PC-9 (cell line): ENCODE measurements at regions of chr12 and their contacts with region 1.

Region 1: GRCh38 chr12:15789220-15790171 is at the start of gene EPS8:
- DNase-seq: peak; percentile 90 to 100
- H3K4me3 ChIP-seq: peak within 1 kb of the TSS; percentile 64
- H3K27ac ChIP-seq: peak within 1 kb of the TSS; percentile 79
- H3K4me1 ChIP-seq: peaks cover 37% of the 10 kb centered on the region
- H3K27me3 ChIP-seq: no peaks in the 10 kb centered on the region
- CTCF ChIP-seq: no peak
- total RNA-seq, gene EPS8: 224 and 232 TPM in 2 replicates

Region 2: DNA sequence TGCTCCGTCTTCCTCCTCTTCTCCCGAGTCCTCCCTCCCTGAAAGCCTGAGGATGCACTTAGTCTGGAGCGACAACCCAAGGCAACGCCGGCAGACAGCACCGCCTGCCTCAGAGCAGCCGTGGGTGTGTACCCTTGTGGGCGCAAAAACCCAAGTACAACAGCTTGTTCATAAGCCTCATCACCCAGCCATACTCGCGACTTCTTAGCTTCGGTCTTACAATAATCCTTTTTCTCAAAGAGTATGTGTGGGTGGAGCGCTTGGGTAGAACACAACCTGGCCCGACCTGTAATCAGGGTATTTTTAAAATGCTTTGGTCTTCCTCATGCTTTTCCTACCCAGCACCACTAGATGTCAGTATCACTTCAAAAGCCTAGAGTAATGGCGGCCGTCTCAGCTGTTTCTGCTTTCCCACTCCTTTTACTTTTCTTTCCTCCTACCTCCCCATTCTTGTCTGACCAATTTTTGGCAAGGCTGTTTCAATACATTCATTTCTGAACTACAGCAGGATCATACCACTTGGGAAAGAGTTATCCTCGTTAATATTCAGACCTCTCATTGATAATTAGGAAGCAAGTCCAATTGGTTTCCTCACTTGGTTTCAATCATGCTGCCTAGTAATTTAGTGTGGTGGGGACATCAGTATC is 199.2 kb before region 1 on chr12:
- CTCF ChIA-PET with region 1: no interaction called
- POLR2A ChIA-PET with region 1: no interaction called
- intact Hi-C with region 1: loop called (anchors 1 kb)
- DNase-seq: peak; percentile 55 to 64
- H3K4me3 ChIP-seq: peak overlapping the region; percentile 35; the same call in 1 of the 2 replicates
- H3K27ac ChIP-seq: no peak overlapping the region
- H3K4me1 ChIP-seq: peaks cover 8% of the 10 kb centered on the region; the same call in 1 of the 2 replicates
- H3K27me3 ChIP-seq: no peaks in the 10 kb centered on the region
- CTCF ChIP-seq: peak; percentile 92

Region 3: DNA sequence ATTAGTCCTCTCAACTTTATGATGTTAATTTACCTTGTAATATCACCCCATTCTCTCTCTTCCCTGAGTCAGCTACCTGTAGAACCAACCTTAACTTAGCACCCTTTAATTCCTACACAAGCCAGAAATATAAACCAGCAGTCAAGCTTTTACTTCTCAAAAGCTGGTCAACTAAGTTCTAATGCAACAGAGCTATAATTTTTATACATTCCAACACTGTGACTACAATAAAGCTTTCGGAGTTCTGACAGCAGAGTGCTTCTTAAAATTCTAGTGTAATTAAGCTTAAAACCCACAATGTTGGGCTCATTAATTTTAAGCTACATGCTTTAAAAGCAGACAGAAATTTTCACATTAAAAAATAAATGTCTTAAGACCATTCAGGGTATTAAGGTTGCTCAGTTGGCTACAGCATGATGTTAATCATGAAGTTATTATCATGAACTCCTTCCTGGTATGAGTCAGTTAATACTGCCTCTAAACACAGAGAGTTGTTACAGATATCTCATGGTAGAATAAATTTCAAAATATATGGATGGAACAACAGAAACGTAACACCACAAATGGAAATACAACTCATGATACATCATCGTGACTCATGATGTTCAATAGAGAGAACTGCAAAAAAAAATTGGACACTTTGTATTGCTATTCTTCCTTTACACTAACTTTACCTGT is 127.1 kb before region 1 on chr12:
- CTCF ChIA-PET with region 1: no interaction called
- POLR2A ChIA-PET with region 1: no interaction called
- intact Hi-C with region 1: loop called (anchors 1 kb)
- DNase-seq: peak in 1 of 2 experiments; percentile 96
- H3K4me3 ChIP-seq: peak overlapping the region; percentile 13; the same call in 1 of the 2 replicates
- H3K27ac ChIP-seq: peak overlapping the region; percentile 97
- H3K4me1 ChIP-seq: peaks cover 23% of the 10 kb centered on the region
- H3K27me3 ChIP-seq: no peaks in the 10 kb centered on the region
- CTCF ChIP-seq: no peak

Region 4: GRCh38 chr12:15700595-15700994 is 88.9 kb before region 1 on chr12:
- CTCF ChIA-PET with region 1: no interaction called
- POLR2A ChIA-PET with region 1: interaction called, 7 read pairs
- intact Hi-C with region 1: loop called (anchors 5 kb)
- DNase-seq: peak in 1 of 2 experiments; percentile 74
- H3K4me3 ChIP-seq: no peak overlapping the region
- H3K27ac ChIP-seq: peak overlapping the region; percentile 58
- H3K4me1 ChIP-seq: peaks cover 27% of the 10 kb centered on the region
- H3K27me3 ChIP-seq: no peaks in the 10 kb centered on the region
- CTCF ChIP-seq: no peak

Region 5: DNA sequence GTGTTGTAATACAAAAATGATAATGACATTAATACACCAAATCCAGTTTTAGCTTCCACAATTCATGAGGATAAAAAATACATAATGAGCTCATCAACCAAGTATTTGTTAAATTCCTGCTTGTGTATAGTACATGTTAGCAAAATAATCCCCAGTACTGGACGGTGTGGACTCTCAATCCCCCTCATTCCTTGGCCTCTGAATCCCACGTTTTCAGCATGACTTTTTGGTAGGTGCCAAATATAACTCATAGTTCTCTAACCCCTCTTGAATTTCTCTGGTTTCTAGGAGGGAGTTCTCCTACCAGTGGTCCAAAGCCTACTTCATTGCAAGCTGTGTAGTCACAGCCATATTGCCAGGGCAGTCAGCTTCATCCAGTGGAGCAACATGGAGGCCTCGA is 41.0 kb after region 1 on chr12:
- CTCF ChIA-PET with region 1: no interaction called
- POLR2A ChIA-PET with region 1: interaction called, 3 read pairs
- intact Hi-C with region 1: loop called (anchors 2 kb)
- DNase-seq: no peak
- H3K4me3 ChIP-seq: no peak overlapping the region
- H3K27ac ChIP-seq: no peak overlapping the region
- H3K4me1 ChIP-seq: peaks cover 25% of the 10 kb centered on the region
- H3K27me3 ChIP-seq: no peaks in the 10 kb centered on the region
- CTCF ChIP-seq: no peak

Region 6: DNA sequence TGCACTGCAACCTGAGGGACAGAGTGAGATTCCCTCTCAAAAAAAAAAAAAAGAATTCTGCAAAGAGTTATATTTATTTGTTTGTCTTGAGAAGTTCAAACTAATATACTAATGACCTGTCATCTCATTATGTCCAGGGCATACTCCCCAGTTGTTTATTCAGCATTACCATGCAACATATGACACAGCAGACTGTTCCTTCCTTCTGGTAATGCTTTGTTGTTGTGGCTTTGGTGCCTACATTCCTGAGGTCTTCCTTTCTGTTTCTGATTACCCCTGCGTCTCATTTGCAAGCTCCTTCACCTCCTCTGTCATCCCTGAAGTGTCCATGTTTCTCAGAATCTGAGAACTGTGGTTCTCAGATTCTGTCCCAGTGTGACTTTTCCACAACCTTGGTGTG is 176.9 kb after region 1 on chr12:
- CTCF ChIA-PET with region 1: no interaction called
- POLR2A ChIA-PET with region 1: no interaction called
- intact Hi-C with region 1: loop called (anchors 10 kb)
- DNase-seq: no peak
- H3K4me3 ChIP-seq: no peak overlapping the region
- H3K27ac ChIP-seq: no peak overlapping the region
- H3K4me1 ChIP-seq: peaks cover 27% of the 10 kb centered on the region
- H3K27me3 ChIP-seq: no peaks in the 10 kb centered on the region
- CTCF ChIP-seq: no peak